Common myeloid progenitor, CD34-positive (primary cell): ENCODE measurements at regions of chr1 and their contacts with region 1.

Region 1: DNA sequence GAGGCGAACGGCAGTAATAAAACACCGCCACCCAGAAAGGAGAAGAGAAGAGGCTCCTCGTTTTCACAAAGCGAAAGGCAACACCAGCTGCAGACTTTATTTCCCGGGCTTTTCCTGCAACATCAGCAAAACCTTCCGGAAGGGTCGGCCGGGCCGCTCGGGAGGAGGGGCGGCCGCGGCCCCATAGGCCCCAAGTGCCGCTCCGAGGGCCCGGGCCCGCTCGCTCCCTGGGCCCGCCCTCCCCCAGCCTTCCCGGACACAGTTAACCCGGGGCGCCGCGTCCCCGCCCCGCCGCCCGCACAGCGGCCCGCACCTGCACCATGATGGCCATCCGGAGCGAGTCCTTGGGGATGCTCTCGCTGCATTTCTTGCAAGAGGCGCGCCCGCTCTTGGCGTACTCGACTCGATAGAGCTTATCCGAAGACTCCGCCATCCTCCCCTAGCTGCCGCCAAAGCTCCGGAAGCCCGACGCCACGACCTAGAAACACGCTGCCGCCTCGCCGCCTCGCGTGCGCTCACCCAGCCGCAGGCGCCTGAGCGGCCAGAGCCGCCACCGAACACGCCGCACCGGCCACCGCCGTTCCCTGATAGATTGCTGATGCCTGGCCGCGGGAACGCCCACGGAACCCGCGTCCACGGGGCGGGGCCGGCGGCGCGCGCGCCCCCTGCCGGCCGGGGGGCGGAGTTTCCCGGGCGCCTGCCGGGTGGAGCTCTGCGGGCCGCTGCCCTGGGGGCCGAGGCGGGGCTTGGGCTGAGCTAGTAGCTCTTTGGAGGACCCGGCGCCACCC is at the start of gene PARP1:
- DNase-seq: peak; percentile 87 to 93 (median 91)
- H3K4me3 ChIP-seq: peak within 1 kb of the TSS; percentile 80 to 92 (median 85)
- H3K27ac ChIP-seq: peak within 1 kb of the TSS; percentile 59 to 86
- H3K4me1 ChIP-seq: peaks cover 24 to 47% (median 43%) of the 10 kb centered on the region in 4 experiments
- H3K27me3 ChIP-seq: no peaks in the 10 kb centered on the region

Region 2: GRCh38 chr1:226250511-226250910 is 157.2 kb before region 1 on chr1:
- CTCF ChIA-PET with region 1: no interaction called
- POLR2A ChIA-PET with region 1: no interaction called
- DNase-seq: no peak
- H3K4me3 ChIP-seq: no peak overlapping the region
- H3K27ac ChIP-seq: no peak overlapping the region
- H3K4me1 ChIP-seq: peaks cover 0 to 3% (median 0%) of the 10 kb centered on the region in 4 experiments
- H3K27me3 ChIP-seq: no peaks in the 10 kb centered on the region

Region 3: DNA sequence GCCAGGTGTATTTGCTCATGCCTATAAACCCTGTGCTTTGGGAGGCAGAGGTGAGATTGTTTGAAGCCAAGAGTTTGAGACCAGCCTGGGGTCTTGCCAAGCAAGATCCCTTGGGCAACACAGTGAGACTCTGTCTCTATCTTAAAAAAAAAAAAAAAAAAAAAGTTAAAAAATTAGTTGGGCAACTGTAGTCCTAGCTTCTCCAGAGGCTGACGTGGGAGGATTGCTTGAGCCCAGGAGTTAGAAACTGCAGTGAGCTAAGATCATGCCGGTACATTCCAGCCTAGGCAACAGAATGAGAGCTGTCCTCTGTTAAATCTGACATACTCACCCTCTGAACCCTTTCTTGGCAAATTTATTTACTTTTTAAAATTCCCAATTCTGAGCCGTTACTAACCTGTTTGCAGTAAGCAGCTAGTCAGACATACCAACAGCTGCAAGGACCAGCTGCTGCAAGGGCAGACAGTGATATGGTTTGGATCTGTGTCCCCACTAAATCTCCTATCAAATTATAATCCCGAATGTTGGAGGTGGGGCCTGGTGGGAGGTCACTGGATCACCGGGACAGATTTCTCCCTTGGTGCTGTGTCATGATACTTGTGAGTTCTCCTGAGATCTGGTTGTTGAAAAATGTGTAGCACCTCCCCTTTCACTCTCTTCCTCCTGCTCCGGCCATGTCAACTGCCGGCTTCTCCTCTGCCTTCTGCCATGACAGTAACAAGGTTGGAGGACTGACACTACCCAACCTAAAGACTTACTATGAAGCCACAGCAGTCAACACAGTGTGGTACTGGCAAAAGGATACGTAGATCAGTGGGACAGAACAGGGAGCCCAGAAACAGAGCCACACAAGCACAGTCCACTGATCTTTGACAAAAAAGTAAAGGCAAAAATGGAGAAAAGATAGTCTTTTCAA is 10.4 kb before region 1 on chr1:
- CTCF ChIA-PET with region 1: interaction called, 16 read pairs
- POLR2A ChIA-PET with region 1: no interaction called
- DNase-seq: no peak
- H3K4me3 ChIP-seq: no peak overlapping the region
- H3K27ac ChIP-seq: no peak overlapping the region
- H3K4me1 ChIP-seq: no peaks in the 10 kb centered on the region
- H3K27me3 ChIP-seq: no peaks in the 10 kb centered on the region

Region 4: DNA sequence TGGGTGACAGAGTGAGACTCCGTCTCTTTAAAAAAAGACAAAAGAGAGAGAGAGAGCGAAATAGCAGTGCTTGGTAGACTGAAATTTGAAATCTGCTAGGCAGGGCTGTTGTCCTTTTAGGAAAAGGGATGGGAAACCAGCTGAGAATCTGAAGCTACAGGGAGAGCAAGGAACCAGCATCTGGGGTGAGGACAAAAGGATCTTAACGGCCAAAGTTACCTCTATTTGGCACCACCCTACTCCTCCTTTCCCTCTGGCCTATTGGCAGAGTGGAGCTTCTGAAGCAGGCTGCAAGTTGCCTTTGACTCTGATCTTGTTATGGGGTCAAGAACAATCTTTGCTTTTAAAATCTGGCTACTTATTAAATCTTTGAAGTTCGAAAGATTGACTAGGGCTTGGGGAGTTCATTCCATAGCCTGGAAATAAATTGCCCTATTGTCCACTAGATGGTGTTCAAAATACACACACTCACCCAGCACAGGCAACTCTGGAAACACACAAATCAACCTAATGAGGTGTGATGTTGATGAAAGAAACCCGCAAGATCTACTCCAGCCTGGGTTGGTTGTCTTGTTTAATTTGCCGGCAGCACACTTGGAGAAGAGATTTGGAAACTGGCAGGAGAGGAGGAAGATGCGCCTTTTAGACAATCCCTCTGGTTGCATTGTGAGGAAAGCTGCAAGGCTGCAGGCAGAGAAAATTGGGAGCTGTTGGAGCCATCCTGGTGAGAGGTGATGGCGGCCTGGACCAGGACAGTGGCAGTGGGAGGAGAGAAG is 16.7 kb after region 1 on chr1:
- CTCF ChIA-PET with region 1: interaction called, 43 read pairs
- POLR2A ChIA-PET with region 1: interaction called, 5 read pairs
- DNase-seq: peak in 2 of 3 donors; percentile 65 to 74
- H3K4me3 ChIP-seq: no peak overlapping the region
- H3K27ac ChIP-seq: no peak overlapping the region
- H3K4me1 ChIP-seq: peaks cover 6 to 28% (median 23%) of the 10 kb centered on the region in 4 experiments
- H3K27me3 ChIP-seq: no peaks in the 10 kb centered on the region

Region 5: DNA sequence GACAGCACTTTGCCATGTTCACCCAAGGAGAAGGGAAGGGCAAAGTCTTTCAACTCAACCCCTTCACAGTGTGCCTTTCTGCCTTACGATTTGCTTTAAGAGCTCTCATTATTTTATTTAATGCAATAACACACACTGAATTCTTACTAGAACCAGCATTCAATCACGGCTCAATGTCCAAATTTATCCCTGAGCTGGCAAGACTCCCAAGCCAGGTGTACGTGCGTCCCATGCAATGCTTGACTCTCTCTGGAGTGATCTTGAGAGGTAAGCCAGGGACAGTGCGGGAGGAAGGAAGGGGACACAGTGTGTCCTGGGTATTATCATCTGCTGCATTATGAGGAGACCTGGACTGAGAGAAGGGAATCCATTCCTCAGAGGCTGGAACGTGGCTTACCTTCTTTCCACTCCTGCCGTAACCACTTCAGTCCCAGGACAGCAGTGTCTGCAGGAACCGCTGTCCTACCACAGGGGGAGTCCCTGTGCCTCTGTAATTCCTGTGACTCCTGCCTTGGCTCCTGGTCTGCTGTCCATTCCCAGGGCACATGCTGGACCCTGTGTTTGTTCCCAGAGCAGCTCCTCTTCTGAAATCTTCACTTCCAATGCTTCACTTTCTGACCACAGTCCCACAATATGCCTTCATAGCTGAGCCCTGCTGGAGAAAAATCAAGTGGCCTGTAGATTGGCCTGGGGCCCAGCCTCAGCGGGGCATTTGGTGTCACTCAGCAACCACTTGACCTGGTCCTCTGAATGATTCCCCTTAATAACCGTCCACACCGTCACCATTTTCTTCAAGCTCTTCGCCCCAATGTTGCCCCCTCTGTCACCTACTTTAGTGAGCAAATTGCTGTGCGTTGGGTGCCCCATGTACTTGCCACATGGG is 112.3 kb after region 1 on chr1:
- CTCF ChIA-PET with region 1: no interaction called
- POLR2A ChIA-PET with region 1: no interaction called
- DNase-seq: no peak
- H3K4me3 ChIP-seq: no peak overlapping the region
- H3K27ac ChIP-seq: no peak overlapping the region
- H3K4me1 ChIP-seq: no peaks in the 10 kb centered on the region
- H3K27me3 ChIP-seq: peaks cover 0 to 8% (median 3%) of the 10 kb centered on the region in 5 experiments